ENCODE measurements at regions of chr15 and their contacts with region 1.

Region 1: DNA sequence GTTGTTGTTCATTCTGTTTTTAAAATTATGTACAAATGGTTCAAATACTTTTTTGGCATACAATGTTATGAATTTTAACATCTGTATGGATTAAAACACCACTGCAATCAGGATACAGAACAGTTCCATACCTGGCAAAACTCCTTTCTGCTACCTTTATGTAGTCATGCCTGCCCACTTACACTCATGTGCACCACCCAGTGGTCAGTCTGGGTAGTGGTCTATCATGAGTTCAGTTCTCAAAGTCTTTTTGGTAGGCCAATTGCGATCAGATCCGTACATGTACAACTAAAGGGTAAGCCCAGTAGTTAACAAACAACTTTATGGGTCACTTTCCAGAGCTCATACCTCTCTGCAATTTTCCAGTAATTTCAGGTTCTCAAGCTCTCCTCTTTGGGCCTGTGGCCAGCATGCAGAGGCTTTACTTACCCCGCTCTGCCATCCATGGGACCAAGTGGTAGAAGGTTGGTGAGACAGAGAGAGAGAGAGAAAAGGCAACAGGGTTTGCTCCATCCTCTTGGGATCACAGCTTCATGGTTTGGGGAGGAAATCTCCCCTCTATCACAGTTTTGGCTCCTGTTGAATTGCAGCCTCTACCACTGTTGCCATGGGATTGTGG is 63.9 kb upstream of the FAM98B start:
- DNase-seq: peak; percentile 58
- ATAC-seq: peak; percentile 89
- H3K4me3 ChIP-seq: no peak overlapping the region
- H3K27ac ChIP-seq: no peak overlapping the region
- H3K4me1 ChIP-seq: no peaks in the 10 kb centered on the region
- H3K27me3 ChIP-seq: no peaks in the 10 kb centered on the region; a peak in 1 of 5 replicates
- CTCF ChIP-seq: peak; percentile 82
- EP300 ChIP-seq: no peak
- POLR2A ChIP-seq: no peak
- RAD21 ChIP-seq: no peak

Region 2: GRCh38 chr15:37995461-37996347 is 394.3 kb before region 1 on chr15:
- CTCF ChIA-PET with region 1: interaction called, 16 read pairs
- POLR2A ChIA-PET with region 1: no interaction called
- in situ Hi-C with region 1: loop called (anchors 10 kb)
- intact Hi-C with region 1: loop called (anchors 1 kb)
- DNase-seq: peak; percentile 18
- ATAC-seq: peak; percentile 41; the same call in 1 of the 3 replicates
- H3K4me3 ChIP-seq: no peak overlapping the region
- H3K27ac ChIP-seq: no peak overlapping the region
- H3K4me1 ChIP-seq: no peaks in the 10 kb centered on the region
- H3K27me3 ChIP-seq: no peaks in the 10 kb centered on the region; a peak in 2 of 5 replicates
- CTCF ChIP-seq: peak; percentile 61
- EP300 ChIP-seq: no peak
- POLR2A ChIP-seq: no peak
- RAD21 ChIP-seq: no peak

Region 3: GRCh38 chr15:38002883-38003477 is 387.1 kb before region 1 on chr15:
- CTCF ChIA-PET with region 1: interaction called, 38 read pairs
- POLR2A ChIA-PET with region 1: no interaction called
- in situ Hi-C with region 1: loop called (anchors 10 kb)
- intact Hi-C with region 1: loop called (anchors 1 kb)
- DNase-seq: peak; percentile 49
- ATAC-seq: peak; percentile 85
- H3K4me3 ChIP-seq: no peak overlapping the region
- H3K27ac ChIP-seq: no peak overlapping the region
- H3K4me1 ChIP-seq: no peaks in the 10 kb centered on the region
- H3K27me3 ChIP-seq: no peaks in the 10 kb centered on the region
- CTCF ChIP-seq: peak; percentile 77
- EP300 ChIP-seq: no peak
- POLR2A ChIP-seq: no peak
- RAD21 ChIP-seq: peak; percentile 58